ENCODE measurements at regions of chr2 and their contacts with region 1.

Region 1: GRCh38 chr2:98269274-98269673 is 77.0 kb upstream of the CNGA3 start:
- DNase-seq: no peak
- H3K4me3 ChIP-seq: no peak overlapping the region
- H3K27me3 ChIP-seq: no peaks in the 10 kb centered on the region; the same call in 1 of the 2 replicates
- CTCF ChIP-seq: peak; percentile 77

Region 2: DNA sequence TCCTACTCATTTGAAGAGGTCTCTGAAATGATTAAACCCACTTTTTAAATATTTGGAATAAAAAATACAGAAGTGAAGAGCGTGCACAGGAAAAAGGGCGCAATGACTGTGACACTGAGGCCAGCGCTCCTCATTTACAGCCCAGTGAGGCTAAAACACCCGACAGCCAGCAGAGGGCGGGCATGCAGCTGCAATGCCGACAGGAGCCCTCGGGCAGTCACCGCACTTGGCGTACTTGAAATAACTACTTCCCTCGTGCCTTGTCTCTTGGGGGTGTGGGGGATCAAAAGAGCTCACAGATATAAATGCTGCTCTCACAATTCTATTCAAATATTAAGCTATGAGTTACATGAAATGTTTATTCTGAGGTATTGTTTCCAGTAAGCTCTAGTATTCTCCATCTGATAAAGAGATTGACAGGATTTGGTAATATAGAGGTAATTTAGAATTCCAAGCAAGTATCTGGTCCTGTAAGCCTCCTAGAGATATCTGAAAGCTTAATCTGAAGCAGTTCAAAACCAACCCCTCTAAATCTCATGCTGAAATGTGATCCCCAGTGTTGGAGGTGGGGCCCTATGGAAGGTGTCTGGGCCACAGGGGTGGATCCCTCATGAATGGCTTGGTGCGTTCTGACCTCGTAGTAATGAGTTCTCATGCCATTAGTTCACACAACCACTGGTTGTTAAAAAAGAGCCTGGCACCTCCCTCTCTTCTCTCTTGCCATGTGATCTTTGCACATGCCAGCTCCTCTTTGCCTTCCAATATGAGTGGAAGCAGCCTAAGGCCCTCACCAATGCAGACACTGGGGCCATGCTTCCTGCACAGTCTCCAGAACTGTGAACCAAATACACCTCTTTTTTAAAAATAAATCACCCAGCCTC is 462.3 kb before region 1 on chr2:
- CTCF ChIA-PET with region 1: interaction called, 19 read pairs
- POLR2A ChIA-PET with region 1: no interaction called
- DNase-seq: peak; percentile 4
- H3K4me3 ChIP-seq: no peak overlapping the region
- H3K27me3 ChIP-seq: no peaks in the 10 kb centered on the region
- CTCF ChIP-seq: peak; percentile 95

Region 3: GRCh38 chr2:98280376-98281102 is 11.3 kb after region 1 on chr2:
- CTCF ChIA-PET with region 1: interaction called, 22 read pairs
- POLR2A ChIA-PET with region 1: no interaction called
- DNase-seq: no peak
- H3K4me3 ChIP-seq: no peak overlapping the region
- H3K27me3 ChIP-seq: peaks cover 4% of the 10 kb centered on the region
- CTCF ChIP-seq: no peak

Region 4: GRCh38 chr2:98394595-98395153 is 125.4 kb after region 1 on chr2:
- CTCF ChIA-PET with region 1: no interaction called
- POLR2A ChIA-PET with region 1: no interaction called
- DNase-seq: no peak
- H3K4me3 ChIP-seq: no peak overlapping the region
- H3K27me3 ChIP-seq: no peaks in the 10 kb centered on the region
- CTCF ChIP-seq: no peak

Region 5: DNA sequence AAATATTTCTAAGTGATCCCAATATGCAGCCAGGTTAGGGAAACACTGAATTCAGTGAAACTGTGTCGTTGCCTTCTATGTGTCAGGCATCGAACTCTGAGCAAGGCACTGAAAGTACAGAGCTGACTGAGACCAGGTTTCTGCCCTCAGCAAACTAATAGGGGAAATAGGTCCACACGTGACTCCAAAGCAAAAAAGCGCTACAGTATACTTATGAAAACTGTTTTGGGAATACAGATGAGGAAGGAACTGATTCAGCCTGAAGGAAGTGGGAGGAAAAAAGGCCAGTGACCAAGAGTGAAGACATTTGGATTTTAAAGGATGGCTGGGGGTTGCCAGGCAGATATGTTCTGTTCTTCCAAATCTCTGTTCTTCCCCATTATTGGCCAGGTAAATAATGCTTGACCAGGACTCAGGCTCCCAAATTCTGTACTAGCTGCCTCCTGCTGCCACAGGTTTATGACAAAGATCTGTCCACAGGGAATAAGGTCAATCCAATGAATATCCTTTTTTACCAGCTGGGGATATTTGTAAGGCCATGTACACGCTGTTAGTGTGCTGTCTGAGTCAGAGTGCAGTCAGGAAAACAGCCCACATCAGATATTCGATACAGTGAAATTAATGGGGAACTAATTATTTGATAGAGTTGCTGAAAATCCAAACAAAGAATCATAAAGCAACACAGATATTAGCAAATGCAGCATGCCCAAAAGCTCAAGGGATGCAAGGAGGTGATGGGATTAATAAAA is 150.9 kb after region 1 on chr2:
- CTCF ChIA-PET with region 1: no interaction called
- POLR2A ChIA-PET with region 1: no interaction called
- DNase-seq: no peak
- H3K4me3 ChIP-seq: no peak overlapping the region
- H3K27me3 ChIP-seq: peaks cover 5% of the 10 kb centered on the region
- CTCF ChIP-seq: no peak

Region 6: DNA sequence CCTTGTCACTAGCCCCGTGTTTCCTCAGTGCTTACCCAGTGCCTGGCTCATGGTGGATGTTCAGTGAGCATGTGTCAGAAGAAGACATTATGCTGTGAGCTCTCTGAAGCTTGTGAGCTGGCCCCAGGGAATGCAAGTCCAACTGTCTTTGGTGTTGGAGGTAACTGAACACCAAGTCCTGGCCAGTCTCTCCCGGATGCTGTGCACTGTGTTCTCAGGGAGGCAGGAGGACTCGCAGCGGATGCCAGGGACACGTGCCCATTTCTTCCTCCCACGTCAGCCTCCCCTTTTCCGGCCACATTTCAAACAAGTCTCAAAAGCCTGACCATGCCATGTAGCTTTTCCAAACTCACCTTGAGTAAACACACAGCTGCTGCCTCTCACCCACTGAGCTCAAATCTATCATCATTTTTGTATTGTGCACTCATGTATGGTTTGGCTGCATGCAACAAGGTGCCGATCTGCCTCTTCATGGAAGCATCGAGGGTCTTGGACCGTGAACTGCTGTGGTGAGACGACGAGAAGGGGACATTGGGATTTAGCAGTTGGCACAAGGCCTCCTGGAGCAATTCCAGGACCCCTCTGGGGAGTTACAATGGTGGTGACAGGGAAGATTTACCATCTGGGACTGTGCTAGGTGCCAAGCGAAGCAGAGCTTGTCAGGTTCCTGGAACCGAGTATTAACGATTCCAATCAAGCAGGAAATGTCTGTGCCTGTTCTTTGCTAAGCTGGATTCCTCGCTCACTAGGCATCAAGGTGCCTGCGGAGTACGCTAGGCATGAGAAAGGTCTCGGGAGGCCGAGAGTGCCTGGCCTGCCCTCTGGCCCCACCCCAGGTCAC is 506.1 kb after region 1 on chr2:
- CTCF ChIA-PET with region 1: no interaction called
- POLR2A ChIA-PET with region 1: no interaction called
- DNase-seq: no peak
- H3K4me3 ChIP-seq: no peak overlapping the region
- H3K27me3 ChIP-seq: peaks cover 3% of the 10 kb centered on the region
- CTCF ChIP-seq: no peak